Pancreas (tissue), 10 donors: ENCODE measurements at regions of chr2 and their contacts with region 1.

Region 1: GRCh38 chr2:209097168-209097567 is 326.7 kb upstream of the MAP2 start:
- DNase-seq: no peak
- ATAC-seq: no peak
- H3K4me3 ChIP-seq: no peak overlapping the region
- H3K27ac ChIP-seq: no peak overlapping the region
- H3K4me1 ChIP-seq: no peaks in the 10 kb centered on the region
- H3K27me3 ChIP-seq: no peaks in the 10 kb centered on the region
- CTCF ChIP-seq: no peak

Region 2: DNA sequence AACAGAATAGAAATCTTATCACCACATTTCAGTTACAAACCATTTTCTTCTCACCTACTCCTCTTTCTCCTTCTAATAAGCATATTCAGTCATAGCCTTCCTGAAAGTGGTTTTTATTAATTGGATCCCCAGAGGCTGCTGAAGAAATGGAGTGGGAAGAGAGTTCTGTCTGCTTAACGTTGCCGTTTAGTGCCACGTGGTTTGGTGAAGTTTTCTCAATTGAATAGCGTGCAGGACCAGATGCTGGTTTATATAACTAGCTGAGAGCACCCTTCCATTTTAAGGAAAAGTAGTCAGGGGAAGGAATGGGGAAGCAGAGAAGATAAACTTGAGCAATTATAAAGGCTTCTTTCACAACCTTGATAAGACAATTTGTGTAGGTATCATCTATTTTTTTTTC is 371.9 kb before region 1 on chr2:
- intact Hi-C with region 1: no loop called
- DNase-seq: no peak
- ATAC-seq: no peak
- H3K4me3 ChIP-seq: no peak overlapping the region
- H3K27ac ChIP-seq: no peak overlapping the region
- H3K4me1 ChIP-seq: no peaks in the 10 kb centered on the region
- H3K27me3 ChIP-seq: no peaks in the 10 kb centered on the region
- CTCF ChIP-seq: no peak

Region 3: GRCh38 chr2:209049608-209050007 is 47.6 kb before region 1 on chr2:
- intact Hi-C with region 1: loop called in 1 of 3 experiments (anchors 5 kb)
- DNase-seq: no peak
- ATAC-seq: no peak
- H3K4me3 ChIP-seq: no peak overlapping the region
- H3K27ac ChIP-seq: no peak overlapping the region
- H3K4me1 ChIP-seq: no peaks in the 10 kb centered on the region
- H3K27me3 ChIP-seq: no peaks in the 10 kb centered on the region
- CTCF ChIP-seq: no peak

Region 4: GRCh38 chr2:209062210-209062609 is 35.0 kb before region 1 on chr2:
- intact Hi-C with region 1: no loop called
- DNase-seq: no peak
- ATAC-seq: no peak
- H3K4me3 ChIP-seq: no peak overlapping the region
- H3K27ac ChIP-seq: no peak overlapping the region
- H3K4me1 ChIP-seq: peaks cover 0 to 4% (median 0%) of the 10 kb centered on the region in 3 donors
- H3K27me3 ChIP-seq: no peaks in the 10 kb centered on the region
- CTCF ChIP-seq: no peak

Region 5: GRCh38 chr2:209230560-209230959 is 133.4 kb after region 1 on chr2:
- intact Hi-C with region 1: no loop called
- DNase-seq: no peak
- ATAC-seq: no peak
- H3K4me3 ChIP-seq: no peak overlapping the region
- H3K27ac ChIP-seq: no peak overlapping the region
- H3K4me1 ChIP-seq: no peaks in the 10 kb centered on the region
- H3K27me3 ChIP-seq: no peaks in the 10 kb centered on the region
- CTCF ChIP-seq: no peak

Region 6: GRCh38 chr2:209473930-209474419 is 376.8 kb after region 1 on chr2:
- intact Hi-C with region 1: no loop called
- DNase-seq: no peak
- ATAC-seq: peak in 3 of 4 donors; percentile 45 to 74 (median 63)
- H3K4me3 ChIP-seq: no peak overlapping the region
- H3K27ac ChIP-seq: no peak overlapping the region
- H3K4me1 ChIP-seq: peaks cover 0 to 12% (median 0%) of the 10 kb centered on the region in 3 donors
- H3K27me3 ChIP-seq: no peaks in the 10 kb centered on the region
- CTCF ChIP-seq: no peak